ENCODE measurements at regions of chr2 and their contacts with region 1.

Region 1: GRCh38 chr2:170873035-170873692 is 55.9 kb upstream of the GORASP2 start:
- DNase-seq: peak; percentile 89
- ATAC-seq: peak; percentile 95
- H3K4me3 Mint-ChIP-seq: peak overlapping the region; percentile 52
- H3K27ac Mint-ChIP-seq: no peak overlapping the region
- H3K4me1 Mint-ChIP-seq: peaks cover 8% of the 10 kb centered on the region
- H3K27me3 Mint-ChIP-seq: no peaks in the 10 kb centered on the region
- CTCF ChIP-seq: peak; percentile 87; the same call in 1 of the 2 replicates

Region 2: GRCh38 chr2:170369894-170370293 is 503.3 kb before region 1 on chr2:
- CTCF ChIA-PET with region 1: interaction called, 10 read pairs
- POLR2A ChIA-PET with region 1: no interaction called
- DNase-seq: no peak
- ATAC-seq: no peak
- H3K4me3 Mint-ChIP-seq: no peak overlapping the region
- H3K27ac Mint-ChIP-seq: no peak overlapping the region
- H3K4me1 Mint-ChIP-seq: peaks cover 56% of the 10 kb centered on the region
- H3K27me3 Mint-ChIP-seq: peaks cover 7% of the 10 kb centered on the region
- CTCF ChIP-seq: no peak

Region 3: DNA sequence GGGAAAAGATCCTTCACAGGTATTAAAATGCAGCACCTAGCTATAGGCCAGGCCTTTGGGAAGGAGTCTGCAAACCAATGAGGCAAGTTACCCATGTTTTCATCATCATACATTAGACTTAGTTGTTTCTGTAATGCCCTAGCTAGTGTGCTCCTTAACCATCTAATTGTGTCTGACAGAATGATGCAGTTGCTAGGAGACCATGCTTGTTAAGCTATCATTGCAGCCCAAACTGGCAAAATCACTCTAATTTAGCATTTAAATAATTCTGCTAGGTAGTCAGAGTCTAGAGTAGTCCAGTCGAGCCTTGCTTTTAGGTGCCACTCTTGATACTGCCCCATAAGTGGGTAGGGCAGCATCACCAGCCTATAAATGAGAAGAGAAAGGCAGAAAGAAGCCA is 21.5 kb before region 1 on chr2:
- CTCF ChIA-PET with region 1: interaction called, 53 read pairs
- POLR2A ChIA-PET with region 1: no interaction called
- DNase-seq: no peak
- ATAC-seq: no peak
- H3K4me3 Mint-ChIP-seq: no peak overlapping the region
- H3K27ac Mint-ChIP-seq: no peak overlapping the region
- H3K4me1 Mint-ChIP-seq: no peaks in the 10 kb centered on the region
- H3K27me3 Mint-ChIP-seq: peaks cover 3% of the 10 kb centered on the region; the same call in 1 of the 2 replicates
- CTCF ChIP-seq: no peak

Region 4: DNA sequence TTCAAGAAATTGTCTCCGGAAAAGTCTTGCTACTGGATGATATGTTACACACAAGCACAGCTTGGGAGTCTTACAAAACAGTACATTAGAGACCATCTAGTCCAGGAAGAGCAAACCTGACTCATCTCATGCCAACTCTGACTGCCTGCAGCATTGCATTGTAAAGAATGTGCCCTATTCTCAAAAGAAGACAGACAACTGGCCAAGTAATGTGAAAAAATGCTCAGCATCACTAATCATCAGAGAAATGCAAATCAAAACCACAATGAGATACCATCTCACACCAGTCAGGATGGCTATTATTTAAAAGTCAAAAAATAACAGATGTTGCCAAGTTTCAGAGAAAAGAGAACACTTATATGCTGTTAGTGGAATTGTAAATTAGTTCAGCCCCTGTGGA is 13.2 kb after region 1 on chr2:
- CTCF ChIA-PET with region 1: interaction called, 18 read pairs
- POLR2A ChIA-PET with region 1: no interaction called
- DNase-seq: no peak
- ATAC-seq: no peak
- H3K4me3 Mint-ChIP-seq: no peak overlapping the region
- H3K27ac Mint-ChIP-seq: no peak overlapping the region
- H3K4me1 Mint-ChIP-seq: peaks cover 9% of the 10 kb centered on the region
- H3K27me3 Mint-ChIP-seq: peaks cover 2% of the 10 kb centered on the region
- CTCF ChIP-seq: no peak

Region 5: DNA sequence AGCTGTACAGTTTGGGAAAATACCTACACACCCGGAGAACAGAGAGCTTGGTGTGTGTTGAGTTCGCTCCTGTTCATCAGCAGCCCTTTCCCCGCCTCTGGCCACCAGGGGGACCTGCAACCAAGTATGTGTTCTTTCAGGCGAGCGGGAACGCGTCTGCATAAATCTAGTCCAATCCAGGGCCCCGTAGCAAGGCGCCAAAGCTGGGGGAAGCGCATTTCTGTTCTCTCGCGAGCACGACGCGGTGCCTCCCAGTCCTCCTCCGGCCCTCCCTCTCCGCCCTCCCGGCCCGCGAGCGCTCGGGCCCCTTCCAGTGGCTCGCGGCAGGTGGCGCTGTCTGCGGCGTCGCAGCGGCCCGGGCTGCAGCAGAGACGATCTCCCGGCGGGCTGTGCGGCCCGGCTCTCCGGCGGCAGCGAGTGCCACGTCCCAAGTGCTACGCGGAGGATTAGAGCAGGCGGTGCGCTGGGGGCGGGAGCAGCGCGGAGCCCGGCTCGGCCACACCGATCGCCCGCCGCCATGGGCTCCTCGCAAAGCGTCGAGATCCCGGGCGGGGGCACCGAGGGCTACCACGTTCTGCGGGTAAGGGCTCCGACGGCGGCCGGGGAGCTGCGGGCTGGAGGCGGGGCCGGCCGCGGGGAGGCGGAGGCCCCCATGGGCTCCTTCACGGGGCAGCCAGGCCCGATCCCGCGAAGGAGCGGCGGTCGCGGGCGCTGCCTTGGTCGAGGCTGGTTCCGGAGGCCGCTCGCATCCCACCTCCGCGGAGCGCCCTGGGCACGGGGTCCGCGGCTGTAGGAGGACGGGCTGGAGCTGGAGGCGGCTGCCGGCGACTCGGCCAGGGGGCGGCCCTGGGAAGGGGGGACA is 55.9 kb after region 1 on chr2 and contains the start of gene GORASP2:
- CTCF ChIA-PET with region 1: interaction called, 20 read pairs
- POLR2A ChIA-PET with region 1: no interaction called
- DNase-seq: peak; percentile 99
- ATAC-seq: peak; percentile 97
- H3K4me3 Mint-ChIP-seq: peak within 1 kb of the TSS; percentile 91
- H3K27ac Mint-ChIP-seq: peak within 1 kb of the TSS; percentile 97
- H3K4me1 Mint-ChIP-seq: peaks cover 46% of the 10 kb centered on the region
- H3K27me3 Mint-ChIP-seq: no peaks in the 10 kb centered on the region
- CTCF ChIP-seq: peak; percentile 91
- total RNA-seq, gene GORASP2: 77.8 to 102 TPM (median 79.2 TPM) in 3 replicates

Region 6: DNA sequence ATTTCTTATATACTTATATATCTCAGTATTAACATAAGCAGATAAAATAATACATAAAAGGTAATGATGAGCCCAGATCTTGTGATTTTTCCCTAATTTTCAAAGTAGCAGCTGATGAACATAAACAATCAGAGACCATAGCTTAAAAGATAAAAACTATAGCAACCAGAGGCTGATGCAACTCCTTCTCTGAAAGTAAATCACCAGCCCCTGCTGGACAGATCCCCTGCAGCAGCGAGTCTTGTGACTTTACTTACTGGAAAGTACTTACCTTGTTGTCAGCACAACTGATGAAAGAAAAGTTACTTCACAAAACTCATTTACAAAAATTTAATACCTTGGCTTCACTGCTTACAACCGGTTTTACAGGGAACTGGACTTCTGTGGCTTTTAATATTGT is 123.2 kb after region 1 on chr2:
- CTCF ChIA-PET with region 1: no interaction called
- POLR2A ChIA-PET with region 1: no interaction called
- DNase-seq: no peak
- ATAC-seq: no peak
- H3K4me3 Mint-ChIP-seq: no peak overlapping the region
- H3K27ac Mint-ChIP-seq: no peak overlapping the region
- H3K4me1 Mint-ChIP-seq: no peaks in the 10 kb centered on the region
- H3K27me3 Mint-ChIP-seq: no peaks in the 10 kb centered on the region
- CTCF ChIP-seq: no peak